Prostate gland (tissue), 2 donors: ENCODE measurements at regions of chr18 and their contacts with region 1.

Region 1: GRCh38 chr18:4720518-4720917 is 265.4 kb upstream of the DLGAP1 start:
- DNase-seq: no peak
- H3K4me3 ChIP-seq: no peak overlapping the region
- H3K27ac ChIP-seq: no peak overlapping the region
- H3K4me1 ChIP-seq: no peaks in the 10 kb centered on the region
- H3K27me3 ChIP-seq: no peaks in the 10 kb centered on the region
- CTCF ChIP-seq: no peak
- POLR2A ChIP-seq: no peak

Region 2: GRCh38 chr18:4236940-4237663 is 483.4 kb before region 1 on chr18:
- intact Hi-C with region 1: no loop called
- DNase-seq: no peak
- H3K4me3 ChIP-seq: no peak overlapping the region
- H3K27ac ChIP-seq: no peak overlapping the region
- H3K4me1 ChIP-seq: no peaks in the 10 kb centered on the region
- H3K27me3 ChIP-seq: no peaks in the 10 kb centered on the region
- CTCF ChIP-seq: no peak
- POLR2A ChIP-seq: no peak

Region 3: GRCh38 chr18:4658804-4659203 is 61.7 kb before region 1 on chr18:
- intact Hi-C with region 1: loop called (anchors 10 kb)
- DNase-seq: no peak
- H3K4me3 ChIP-seq: no peak overlapping the region
- H3K27ac ChIP-seq: no peak overlapping the region
- H3K4me1 ChIP-seq: no peaks in the 10 kb centered on the region
- H3K27me3 ChIP-seq: no peaks in the 10 kb centered on the region
- CTCF ChIP-seq: no peak
- POLR2A ChIP-seq: no peak